ENCODE measurements at regions of chr6 and their contacts with region 1.

Region 1: GRCh38 chr6:29926413-29927274 is 15.7 kb upstream of the HLA-A start:
- DNase-seq: peak; percentile 93
- H3K4me3 Mint-ChIP-seq: peak overlapping the region; percentile 86
- H3K27ac Mint-ChIP-seq: peak overlapping the region; percentile 91
- H3K4me1 Mint-ChIP-seq: peaks cover 23% of the 10 kb centered on the region
- H3K27me3 Mint-ChIP-seq: no peaks in the 10 kb centered on the region

Region 2: DNA sequence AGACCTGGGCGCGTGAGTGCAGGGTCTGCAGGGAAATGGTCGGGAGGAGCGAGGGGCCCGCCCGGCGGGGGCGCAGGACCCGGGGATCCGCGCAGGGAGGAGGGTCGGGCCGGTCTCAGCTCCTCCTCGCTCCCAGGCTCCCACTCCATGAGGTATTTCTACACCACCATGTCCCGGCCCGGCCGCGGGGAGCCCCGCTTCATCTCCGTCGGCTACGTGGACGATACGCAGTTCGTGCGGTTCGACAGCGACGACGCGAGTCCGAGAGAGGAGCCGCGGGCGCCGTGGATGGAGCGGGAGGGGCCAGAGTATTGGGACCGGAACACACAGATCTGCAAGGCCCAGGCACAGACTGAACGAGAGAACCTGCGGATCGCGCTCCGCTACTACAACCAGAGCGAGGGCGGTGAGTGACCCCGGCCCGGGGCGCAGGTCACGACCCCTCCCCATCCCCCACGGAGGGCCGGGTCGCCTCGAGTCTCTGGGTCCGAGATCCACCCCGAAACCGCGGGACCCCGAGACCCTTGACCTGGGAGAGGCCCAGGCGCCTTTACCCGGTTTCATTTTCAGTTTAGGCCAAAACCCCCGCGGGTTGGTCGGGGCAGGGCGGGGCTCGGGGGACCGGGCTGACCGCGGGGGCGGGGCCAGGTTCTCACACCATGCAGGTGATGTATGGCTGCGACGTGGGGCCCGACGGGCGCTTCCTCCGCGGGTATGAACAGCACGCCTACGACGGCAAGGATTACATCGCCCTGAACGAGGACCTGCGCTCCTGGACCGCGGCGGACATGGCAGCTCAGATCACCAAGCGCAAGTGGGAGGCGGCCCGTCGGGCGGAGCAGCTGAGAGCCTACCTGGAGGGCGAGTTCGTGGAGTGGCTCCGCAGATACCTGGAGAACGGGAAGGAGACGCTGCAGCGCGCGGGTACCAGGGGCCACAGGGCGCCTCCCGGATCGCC is 38.5 kb before region 1 on chr6:
- CTCF ChIA-PET with region 1: no interaction called
- POLR2A ChIA-PET with region 1: no interaction called
- intact Hi-C with region 1: loop called (anchors 1 kb)
- DNase-seq: peak; percentile 93
- H3K4me3 Mint-ChIP-seq: peak overlapping the region; percentile 81
- H3K27ac Mint-ChIP-seq: peak overlapping the region; percentile 88
- H3K4me1 Mint-ChIP-seq: peaks cover 13% of the 10 kb centered on the region
- H3K27me3 Mint-ChIP-seq: no peaks in the 10 kb centered on the region

Region 3: GRCh38 chr6:29907637-29908340 is 18.9 kb before region 1 on chr6:
- CTCF ChIA-PET with region 1: no interaction called
- POLR2A ChIA-PET with region 1: no interaction called
- intact Hi-C with region 1: no loop called
- DNase-seq: no peak
- H3K4me3 Mint-ChIP-seq: no peak overlapping the region
- H3K27ac Mint-ChIP-seq: no peak overlapping the region
- H3K4me1 Mint-ChIP-seq: peaks cover 11% of the 10 kb centered on the region
- H3K27me3 Mint-ChIP-seq: peaks cover 10% of the 10 kb centered on the region

Region 4: GRCh38 chr6:29964887-29965562 is 38.4 kb after region 1 on chr6:
- CTCF ChIA-PET with region 1: interaction called, 3 read pairs
- POLR2A ChIA-PET with region 1: no interaction called
- intact Hi-C with region 1: loop called (anchors 1 kb)
- DNase-seq: peak; percentile 88
- H3K4me3 Mint-ChIP-seq: peak overlapping the region; percentile 82
- H3K27ac Mint-ChIP-seq: peak overlapping the region; percentile 95
- H3K4me1 Mint-ChIP-seq: peaks cover 43% of the 10 kb centered on the region
- H3K27me3 Mint-ChIP-seq: no peaks in the 10 kb centered on the region

Region 5: GRCh38 chr6:30066577-30067459 is 140.2 kb after region 1 on chr6 and contains the start of gene PPP1R11:
- CTCF ChIA-PET with region 1: no interaction called
- POLR2A ChIA-PET with region 1: no interaction called
- intact Hi-C with region 1: loop called (anchors 2 kb)
- DNase-seq: peak; percentile 100
- H3K4me3 Mint-ChIP-seq: peak within 1 kb of the TSS; percentile 88
- H3K27ac Mint-ChIP-seq: peak within 1 kb of the TSS; percentile 95
- H3K4me1 Mint-ChIP-seq: peaks cover 50% of the 10 kb centered on the region
- H3K27me3 Mint-ChIP-seq: peaks cover 8% of the 10 kb centered on the region
- total RNA-seq, gene PPP1R11: 51.3 to 55.0 TPM